ENCODE measurements at regions of chr6 and their contacts with region 1.

Region 1: GRCh38 chr6:32885698-32886286 is 31.8 kb downstream of the PSMB9 start:
- DNase-seq: peak; percentile 39 to 66
- ATAC-seq: peak in 1 of 2 experiments; percentile 76; a peak in 3 of 6 replicates
- H3K4me3 ChIP-seq: no peak overlapping the region
- H3K27ac ChIP-seq: 0 out of 6 replicates have a peak overlapping the region, but pooled peaks of 1 of the 2 experiments have one; percentile 5
- H3K4me1 ChIP-seq: peaks cover 16% of the 10 kb centered on the region
- CTCF ChIP-seq: peak; percentile 66
- EP300 ChIP-seq: no peak
- POLR2A ChIP-seq: no peak
- RAD21 ChIP-seq: peak; percentile 80 to 82

Region 2: DNA sequence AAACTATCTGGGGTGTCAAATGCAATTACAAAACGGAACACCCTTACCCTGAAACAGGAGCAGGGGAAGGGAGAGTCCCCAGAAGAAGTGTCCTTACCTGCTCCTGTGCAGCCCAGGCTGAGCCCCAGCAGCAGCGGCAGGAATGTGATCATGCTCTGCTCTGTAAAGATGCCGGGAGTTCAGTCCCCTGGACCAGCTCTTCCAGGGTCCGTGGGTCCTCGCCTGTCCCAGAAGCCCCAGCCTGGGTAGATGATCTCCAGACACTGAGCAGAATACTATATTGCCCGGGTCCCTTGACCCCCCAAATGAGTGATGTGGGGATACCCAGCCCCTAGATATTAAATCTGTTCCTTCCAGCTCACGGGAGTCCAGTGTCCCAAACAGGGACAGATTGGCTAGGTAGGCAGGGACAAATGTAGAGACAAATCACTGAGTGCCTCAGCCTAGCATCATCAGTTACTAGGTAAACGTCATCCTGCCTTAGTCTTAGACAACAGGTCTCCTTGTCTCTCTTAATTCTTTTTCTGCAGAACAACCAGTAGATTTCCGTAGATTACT is 54.9 kb after region 1 on chr6 and contains the start of gene HLA-DMB:
- CTCF ChIA-PET with region 1: interaction called, 15 read pairs
- POLR2A ChIA-PET with region 1: no interaction called
- DNase-seq: peak; percentile 79 to 87
- ATAC-seq: peak; percentile 100
- H3K4me3 ChIP-seq: peak within 1 kb of the TSS; percentile 44
- H3K27ac ChIP-seq: peak within 1 kb of the TSS; percentile 35 to 73; a peak in 3 of 6 replicates
- H3K4me1 ChIP-seq: no peaks in the 10 kb centered on the region
- CTCF ChIP-seq: no peak
- EP300 ChIP-seq: no peak
- POLR2A ChIP-seq: no peak
- RAD21 ChIP-seq: no peak
- polyA plus RNA-seq, gene HLA-DMB: 14.3 and 21.6 TPM in 2 replicates

Region 3: DNA sequence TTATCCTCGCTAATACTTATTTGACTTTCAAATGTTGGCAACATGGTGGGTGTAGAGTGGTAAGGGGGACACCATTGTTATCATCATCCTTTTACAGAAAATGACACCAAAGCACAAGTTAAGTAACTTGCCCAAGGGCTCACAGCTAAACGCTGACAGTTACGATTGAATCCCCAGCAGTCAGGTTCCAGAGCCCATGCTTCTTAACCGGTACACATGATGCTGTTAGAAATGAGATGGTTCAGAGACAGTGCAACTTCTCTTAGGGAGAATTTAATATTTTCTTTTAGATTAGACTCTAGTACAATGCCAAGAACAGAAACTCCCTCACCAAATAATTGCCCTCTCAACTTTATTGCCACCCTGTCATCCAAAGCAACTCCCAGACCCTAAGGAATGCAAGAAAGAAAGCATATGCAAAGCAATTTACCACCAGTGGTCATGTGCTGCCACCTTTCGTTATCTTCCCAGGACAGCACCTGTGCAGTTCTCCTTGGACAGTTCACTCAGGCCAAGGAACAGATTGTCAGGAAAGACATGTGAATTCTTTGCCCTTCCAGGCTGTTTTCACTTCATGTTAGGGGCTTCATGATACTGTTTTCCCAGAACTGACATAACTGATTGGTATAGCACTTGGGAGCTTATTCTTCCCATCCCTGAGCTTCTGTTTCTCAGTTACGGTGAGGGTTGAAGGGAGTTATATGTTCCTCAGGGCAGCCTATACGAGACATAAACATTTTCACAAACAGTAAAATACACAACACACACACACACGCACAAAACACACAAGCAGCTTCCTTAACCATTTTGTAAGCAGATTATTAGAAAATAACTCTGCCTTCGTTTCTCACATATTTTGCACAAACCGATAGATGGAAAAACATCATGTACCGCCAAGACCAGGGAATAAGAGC is 62.0 kb after region 1 on chr6:
- CTCF ChIA-PET with region 1: interaction called, 28 read pairs
- POLR2A ChIA-PET with region 1: no interaction called
- DNase-seq: peak in 1 of 2 experiments; percentile 75
- ATAC-seq: peak; percentile 92 to 95
- H3K4me3 ChIP-seq: no peak overlapping the region
- H3K27ac ChIP-seq: no peak overlapping the region
- H3K4me1 ChIP-seq: peaks cover 4% of the 10 kb centered on the region; the same call in 1 of the 3 replicates
- CTCF ChIP-seq: peak; percentile 78
- EP300 ChIP-seq: no peak
- POLR2A ChIP-seq: no peak
- RAD21 ChIP-seq: peak; percentile 91 to 94

Region 4: GRCh38 chr6:33082702-33083101 is 196.9 kb after region 1 on chr6:
- CTCF ChIA-PET with region 1: no interaction called
- POLR2A ChIA-PET with region 1: no interaction called
- DNase-seq: peak; percentile 24 to 50
- ATAC-seq: peak; percentile 60 to 92; a peak in 4 of 6 replicates
- H3K4me3 ChIP-seq: no peak overlapping the region
- H3K27ac ChIP-seq: no peak overlapping the region
- H3K4me1 ChIP-seq: no peaks in the 10 kb centered on the region
- CTCF ChIP-seq: peak; percentile 39
- EP300 ChIP-seq: no peak
- POLR2A ChIP-seq: no peak
- RAD21 ChIP-seq: peak in 1 of 2 experiments; percentile 36; a peak in 2 of 5 replicates